A549 (cell line): ENCODE measurements at regions of chr10 and their contacts with region 1.

Region 1: GRCh38 chr10:30591249-30591670 is 38.3 kb downstream of the LYZL2 start:
- DNase-seq: peak; percentile 48 to 67
- ATAC-seq: peak; percentile 77 to 83
- H3K4me3 ChIP-seq: no peak overlapping the region
- H3K27ac ChIP-seq: peak overlapping the region; percentile 35 to 76; a peak in 5 of 6 replicates
- H3K4me1 ChIP-seq: 0 out of 3 replicates have a peak, but pooled peaks cover 5% of the 10 kb centered on the region
- CTCF ChIP-seq: peak; percentile 86
- EP300 ChIP-seq: no peak
- POLR2A ChIP-seq: no peak
- RAD21 ChIP-seq: peak; percentile 86 to 93

Region 2: DNA sequence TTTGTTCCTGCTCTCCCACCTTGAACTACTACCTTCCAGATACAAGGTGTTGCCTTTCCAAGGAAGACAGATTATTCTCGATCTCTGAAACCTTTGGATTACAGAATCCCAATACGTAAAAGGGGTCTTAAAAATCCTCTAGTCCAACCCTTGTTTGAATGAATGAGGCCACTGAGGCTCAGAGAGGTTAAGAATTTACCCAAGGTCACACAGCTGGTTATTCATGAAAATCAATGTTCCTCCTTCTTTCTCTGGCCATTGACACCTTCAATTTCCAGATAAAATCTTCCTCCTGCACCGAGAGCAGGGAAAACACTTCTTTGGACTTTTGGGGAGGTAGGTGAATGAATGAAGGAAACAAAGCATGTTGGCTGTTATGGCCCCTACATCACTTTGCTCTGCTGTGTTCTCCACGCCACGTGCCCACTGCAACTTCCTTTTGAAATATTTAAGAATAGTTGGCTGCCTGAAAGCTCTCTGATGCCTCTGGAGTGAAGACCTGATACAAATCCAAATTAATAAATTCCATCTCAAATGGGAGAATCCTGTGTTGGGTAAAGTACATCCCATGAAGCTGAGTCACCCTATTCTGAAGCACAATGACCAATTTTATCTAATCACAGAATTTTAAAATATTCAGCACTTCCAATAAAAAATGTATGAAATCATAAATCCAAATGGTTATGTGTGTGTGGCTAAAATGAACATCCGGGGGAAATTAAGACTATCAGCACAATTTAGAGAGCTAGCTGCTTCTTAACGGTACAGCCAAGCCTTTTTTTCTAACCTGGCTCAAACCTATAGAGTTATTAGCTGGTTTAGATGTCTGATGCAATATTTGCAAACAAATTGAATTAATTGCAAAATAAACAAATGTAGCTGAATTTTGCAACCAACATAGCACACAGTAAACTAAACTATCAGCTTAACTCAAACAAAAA is 963.8 kb before region 1 on chr10:
- CTCF ChIA-PET with region 1: no interaction called
- POLR2A ChIA-PET with region 1: no interaction called
- DNase-seq: no peak
- ATAC-seq: no peak
- H3K4me3 ChIP-seq: no peak overlapping the region
- H3K27ac ChIP-seq: peak overlapping the region in 1 of 2 experiments; percentile 29; a peak in 2 of 6 replicates
- H3K4me1 ChIP-seq: peaks cover 22% of the 10 kb centered on the region
- CTCF ChIP-seq: no peak
- EP300 ChIP-seq: no peak
- POLR2A ChIP-seq: no peak
- RAD21 ChIP-seq: no peak

Region 3: GRCh38 chr10:30270247-30270646 is 321.0 kb before region 1 on chr10:
- CTCF ChIA-PET with region 1: interaction called, 10 read pairs
- POLR2A ChIA-PET with region 1: no interaction called
- DNase-seq: peak in 1 of 2 experiments; percentile 5
- ATAC-seq: peak in 1 of 2 experiments; percentile 30; a peak in 1 of 6 replicates
- H3K4me3 ChIP-seq: no peak overlapping the region
- H3K27ac ChIP-seq: no peak overlapping the region
- H3K4me1 ChIP-seq: no peaks in the 10 kb centered on the region
- CTCF ChIP-seq: peak; percentile 23; the same call in 2 of the 3 replicates
- EP300 ChIP-seq: no peak
- POLR2A ChIP-seq: no peak
- RAD21 ChIP-seq: no peak

Region 4: DNA sequence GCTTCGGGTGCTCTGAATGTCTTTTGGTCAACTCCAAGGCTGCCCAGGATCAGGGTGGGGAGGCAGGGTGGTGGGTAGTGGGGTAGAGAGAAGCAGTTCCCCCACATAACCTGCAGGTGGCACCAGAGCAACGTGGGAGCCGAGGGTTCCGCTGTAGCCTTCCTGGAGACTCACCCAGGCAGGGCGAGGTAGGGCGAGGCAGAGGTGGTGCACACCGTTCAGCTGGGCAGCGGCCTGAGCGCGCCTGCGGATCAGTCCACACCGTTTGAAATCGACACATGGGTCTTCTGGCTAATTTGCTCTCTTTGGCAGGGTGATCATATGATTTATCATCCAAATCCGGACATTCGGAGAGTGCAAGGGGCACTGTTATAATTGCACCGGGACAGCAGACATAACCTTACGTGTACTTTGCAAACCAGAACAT is 198.7 kb before region 1 on chr10:
- CTCF ChIA-PET with region 1: interaction called, 216 read pairs
- POLR2A ChIA-PET with region 1: no interaction called
- DNase-seq: peak; percentile 79 to 91
- ATAC-seq: peak; percentile 98 to 100
- H3K4me3 ChIP-seq: no peak overlapping the region
- H3K27ac ChIP-seq: peak overlapping the region; percentile 55 to 72; a peak in 4 of 6 replicates
- H3K4me1 ChIP-seq: peaks cover 7% of the 10 kb centered on the region; the same call in 1 of the 3 replicates
- CTCF ChIP-seq: peak; percentile 94
- EP300 ChIP-seq: no peak
- POLR2A ChIP-seq: no peak
- RAD21 ChIP-seq: peak; percentile 98 to 99

Region 5: DNA sequence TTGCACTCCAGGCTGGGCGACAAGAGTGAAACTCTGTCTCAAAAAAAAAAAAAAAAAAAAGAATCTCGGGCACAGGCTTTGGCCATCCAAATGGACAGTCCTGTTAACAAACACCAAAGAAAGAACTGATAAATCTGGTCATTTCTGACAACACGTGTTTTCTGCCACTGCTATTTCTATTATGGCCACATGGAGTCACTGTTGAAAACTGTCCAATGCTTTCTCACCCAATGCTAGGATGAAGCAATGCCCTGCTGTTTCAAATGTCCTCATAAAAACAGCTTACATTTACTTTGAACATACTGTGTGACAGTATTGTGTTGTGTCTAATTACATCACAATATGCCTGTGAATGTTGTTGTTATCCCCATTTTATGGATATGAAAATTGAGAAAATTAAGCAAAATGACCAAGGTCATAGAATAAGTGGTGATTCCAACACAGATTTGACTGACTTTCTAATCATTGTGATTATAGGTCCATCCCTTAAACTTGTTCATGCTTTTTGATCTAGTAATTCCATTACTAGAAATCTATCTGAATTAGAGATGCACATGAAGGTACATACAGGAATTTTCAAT is 177.2 kb before region 1 on chr10:
- CTCF ChIA-PET with region 1: interaction called, 56 read pairs
- POLR2A ChIA-PET with region 1: no interaction called
- DNase-seq: peak; percentile 80 to 84
- ATAC-seq: peak; percentile 80 to 85
- H3K4me3 ChIP-seq: no peak overlapping the region
- H3K27ac ChIP-seq: peak overlapping the region; percentile 27 to 63; a peak in 4 of 6 replicates
- H3K4me1 ChIP-seq: peaks cover 17% of the 10 kb centered on the region
- CTCF ChIP-seq: peak; percentile 76
- EP300 ChIP-seq: no peak
- POLR2A ChIP-seq: no peak
- RAD21 ChIP-seq: peak; percentile 84

Region 6: DNA sequence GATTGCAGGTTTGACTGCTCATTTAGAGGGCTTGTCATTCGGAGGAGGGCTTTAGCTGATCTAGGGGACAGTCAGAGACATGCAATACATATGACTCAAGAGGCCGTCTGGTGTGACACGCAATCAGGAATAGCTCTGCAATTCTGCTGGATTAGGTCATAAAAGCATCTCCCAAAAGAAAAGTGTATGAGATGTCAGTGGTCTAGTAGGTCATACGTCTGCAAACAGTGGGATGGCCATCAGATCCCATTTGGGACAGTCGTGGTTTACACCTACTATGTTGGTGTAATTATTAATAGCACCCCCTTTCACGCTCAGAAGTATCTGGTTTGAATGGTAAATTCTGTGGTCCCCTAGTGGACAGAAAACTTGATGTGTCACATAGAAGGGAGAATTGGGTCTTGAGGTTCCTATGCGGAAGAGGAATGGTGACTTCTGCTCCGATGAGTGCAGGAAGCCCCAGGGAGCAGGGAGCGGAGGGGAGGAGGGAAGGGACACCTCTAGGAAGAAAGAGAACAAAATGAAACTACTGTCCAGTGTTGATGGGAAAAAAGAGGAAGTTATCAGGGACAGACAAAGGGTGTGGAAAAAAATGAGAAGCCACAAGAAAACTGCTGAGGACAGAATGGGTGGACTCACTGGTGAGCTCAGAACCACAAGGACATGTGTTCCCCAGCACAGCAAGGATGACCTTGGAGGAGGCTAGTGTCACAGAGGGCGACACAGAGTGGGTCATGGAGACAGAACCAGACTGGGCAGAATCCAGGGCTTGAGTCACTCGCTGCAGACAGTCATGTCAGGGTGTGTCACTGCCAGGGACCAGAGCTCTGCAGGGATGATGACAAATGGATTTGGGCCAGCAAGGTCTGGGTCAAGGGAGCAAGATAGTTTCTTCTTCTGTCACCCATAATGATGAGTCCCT is 97.4 kb before region 1 on chr10:
- CTCF ChIA-PET with region 1: interaction called, 12 read pairs
- POLR2A ChIA-PET with region 1: no interaction called
- DNase-seq: peak in 1 of 2 experiments; percentile 38
- ATAC-seq: peak; percentile 47 to 49; a peak in 5 of 6 replicates
- H3K4me3 ChIP-seq: no peak overlapping the region
- H3K27ac ChIP-seq: peak overlapping the region in 1 of 2 experiments; percentile 43; a peak in 2 of 6 replicates
- H3K4me1 ChIP-seq: peaks cover 36% of the 10 kb centered on the region
- CTCF ChIP-seq: no peak
- EP300 ChIP-seq: no peak
- POLR2A ChIP-seq: no peak
- RAD21 ChIP-seq: no peak

Region 7: DNA sequence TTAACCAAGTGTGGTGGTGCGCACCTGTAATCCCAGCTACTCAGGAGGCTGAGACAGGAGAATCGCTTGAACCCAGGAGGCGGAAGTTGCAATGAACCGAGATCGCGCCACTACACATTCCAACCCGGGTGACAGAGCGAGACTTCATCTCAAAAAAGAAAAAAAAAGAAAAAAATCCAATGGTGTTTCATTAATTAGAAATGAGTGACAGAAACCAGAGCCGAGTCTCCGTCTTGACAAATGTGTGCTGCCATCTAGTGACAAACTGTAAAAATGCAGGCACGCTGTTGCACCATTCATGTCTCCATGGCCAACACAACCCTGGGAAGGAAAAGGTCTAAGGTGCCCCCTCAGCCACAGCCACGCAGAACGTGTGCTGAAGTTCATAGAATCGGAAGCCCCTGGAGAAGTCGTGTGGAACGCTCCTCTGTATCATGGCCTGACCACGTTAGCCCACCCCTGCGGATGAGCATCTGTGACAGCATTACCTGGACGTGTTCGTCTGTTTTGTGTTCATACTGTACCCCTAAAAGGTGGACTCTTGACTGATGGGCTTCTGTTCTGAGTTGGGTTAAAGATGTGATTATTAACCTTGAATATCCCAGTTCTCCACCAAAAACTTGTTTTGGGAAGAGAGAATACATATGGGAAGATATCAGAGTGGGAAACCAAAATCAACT is 56.7 kb before region 1 on chr10:
- CTCF ChIA-PET with region 1: interaction called, 37 read pairs
- POLR2A ChIA-PET with region 1: no interaction called
- DNase-seq: peak; percentile 61 to 85
- ATAC-seq: peak; percentile 41 to 58; a peak in 3 of 6 replicates
- H3K4me3 ChIP-seq: no peak overlapping the region
- H3K27ac ChIP-seq: peak overlapping the region; percentile 78 to 88
- H3K4me1 ChIP-seq: peaks cover 61% of the 10 kb centered on the region
- CTCF ChIP-seq: peak; percentile 84
- EP300 ChIP-seq: no peak
- POLR2A ChIP-seq: no peak
- RAD21 ChIP-seq: peak; percentile 89 to 91

Region 8: DNA sequence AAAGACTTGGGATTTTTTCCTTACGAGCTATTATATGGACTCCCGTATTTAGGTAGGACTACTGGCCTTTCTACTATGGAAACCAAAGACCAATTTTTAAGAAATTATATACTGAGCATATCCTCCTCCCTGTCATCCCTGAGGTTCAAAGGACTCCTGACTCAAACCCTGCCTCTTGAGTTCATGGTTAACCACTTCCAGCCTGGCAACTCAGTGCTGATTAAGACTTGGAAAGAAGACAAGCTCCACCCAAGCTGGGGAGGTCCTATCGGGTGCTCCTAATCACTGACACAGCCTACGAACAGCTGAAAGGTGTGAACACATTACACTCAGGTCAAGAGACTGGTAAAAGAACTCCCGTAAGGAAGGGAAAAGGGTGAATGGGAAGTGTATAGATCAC is 28.5 kb before region 1 on chr10:
- CTCF ChIA-PET with region 1: interaction called, 19 read pairs
- POLR2A ChIA-PET with region 1: no interaction called
- DNase-seq: no peak
- ATAC-seq: no peak
- H3K4me3 ChIP-seq: no peak overlapping the region
- H3K27ac ChIP-seq: peak overlapping the region in 1 of 2 experiments; percentile 47; a peak in 3 of 6 replicates
- H3K4me1 ChIP-seq: peaks cover 14% of the 10 kb centered on the region
- CTCF ChIP-seq: no peak
- EP300 ChIP-seq: no peak
- POLR2A ChIP-seq: no peak
- RAD21 ChIP-seq: no peak